Common myeloid progenitor, CD34-positive (primary cell): ENCODE measurements at regions of chr11 and their contacts with region 1.

Region 1: GRCh38 chr11:82701847-82702520 is 31.7 kb downstream of the FAM181B start:
- DNase-seq: peak; percentile 31 to 59 (median 48)
- H3K4me3 ChIP-seq: no peak overlapping the region
- H3K27ac ChIP-seq: no peak overlapping the region
- H3K4me1 ChIP-seq: no peaks in the 10 kb centered on the region
- H3K27me3 ChIP-seq: peaks cover 0 to 5% (median 0%) of the 10 kb centered on the region in 5 experiments

Region 2: DNA sequence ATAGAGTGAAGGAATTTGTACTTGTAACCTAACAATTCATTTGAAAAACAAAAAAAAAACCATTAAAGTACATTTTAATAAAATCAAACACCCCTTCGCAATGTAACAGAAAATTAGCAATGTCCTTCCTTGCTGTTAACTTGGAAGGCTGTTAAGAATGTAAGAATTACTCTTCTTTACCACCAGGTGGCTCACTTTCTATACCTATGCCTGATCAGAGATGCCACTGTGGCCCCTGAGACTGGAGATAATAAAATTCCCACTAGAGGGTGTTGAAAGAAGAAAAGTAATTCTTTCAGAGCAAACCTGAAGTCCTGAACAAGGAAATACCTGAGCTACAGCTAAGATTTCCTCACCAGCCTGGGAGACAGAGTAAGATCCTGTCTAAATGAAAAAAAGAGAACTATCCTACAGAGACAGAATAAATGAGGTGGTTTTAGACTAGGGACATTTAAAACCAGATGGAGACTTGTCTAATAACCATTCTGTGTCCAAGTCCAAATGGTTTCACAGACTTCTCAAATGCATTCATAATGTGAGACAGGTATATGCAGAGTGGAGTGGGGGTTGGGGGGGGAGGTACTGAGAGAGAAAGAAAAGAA is 1057.6 kb before region 1 on chr11:
- CTCF ChIA-PET with region 1: interaction called, 35 read pairs
- POLR2A ChIA-PET with region 1: no interaction called
- DNase-seq: peak; percentile 36 to 65 (median 63)
- H3K4me3 ChIP-seq: no peak overlapping the region
- H3K27ac ChIP-seq: no peak overlapping the region
- H3K4me1 ChIP-seq: no peaks in the 10 kb centered on the region
- H3K27me3 ChIP-seq: peaks cover 3 to 32% (median 6%) of the 10 kb centered on the region in 5 experiments

Region 3: DNA sequence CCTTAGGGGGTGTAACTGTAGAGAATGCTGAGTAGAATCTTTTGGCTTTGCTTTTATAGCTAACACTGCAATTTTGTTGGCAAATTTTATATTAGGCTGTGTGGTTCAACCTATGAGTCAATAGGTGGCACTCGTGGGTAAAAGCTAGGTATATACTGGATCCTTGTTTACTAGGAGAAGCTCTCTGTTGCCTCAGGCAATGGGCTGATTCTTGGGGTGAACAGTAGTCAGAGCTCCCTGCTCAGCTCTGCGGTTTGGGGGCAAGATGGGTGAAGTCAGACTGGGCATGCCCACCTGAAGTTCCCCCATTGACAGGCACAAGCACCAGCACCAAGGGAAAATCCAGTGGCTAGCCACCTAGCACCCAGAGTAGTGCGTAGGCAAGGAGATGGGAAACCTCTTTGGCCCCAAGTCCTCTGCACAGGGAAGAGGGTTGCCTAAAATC is 207.0 kb before region 1 on chr11:
- CTCF ChIA-PET with region 1: interaction called, 17 read pairs
- POLR2A ChIA-PET with region 1: no interaction called
- DNase-seq: peak; percentile 11 to 29 (median 21)
- H3K4me3 ChIP-seq: no peak overlapping the region
- H3K27ac ChIP-seq: no peak overlapping the region
- H3K4me1 ChIP-seq: no peaks in the 10 kb centered on the region
- H3K27me3 ChIP-seq: no peaks in the 10 kb centered on the region

Region 4: DNA sequence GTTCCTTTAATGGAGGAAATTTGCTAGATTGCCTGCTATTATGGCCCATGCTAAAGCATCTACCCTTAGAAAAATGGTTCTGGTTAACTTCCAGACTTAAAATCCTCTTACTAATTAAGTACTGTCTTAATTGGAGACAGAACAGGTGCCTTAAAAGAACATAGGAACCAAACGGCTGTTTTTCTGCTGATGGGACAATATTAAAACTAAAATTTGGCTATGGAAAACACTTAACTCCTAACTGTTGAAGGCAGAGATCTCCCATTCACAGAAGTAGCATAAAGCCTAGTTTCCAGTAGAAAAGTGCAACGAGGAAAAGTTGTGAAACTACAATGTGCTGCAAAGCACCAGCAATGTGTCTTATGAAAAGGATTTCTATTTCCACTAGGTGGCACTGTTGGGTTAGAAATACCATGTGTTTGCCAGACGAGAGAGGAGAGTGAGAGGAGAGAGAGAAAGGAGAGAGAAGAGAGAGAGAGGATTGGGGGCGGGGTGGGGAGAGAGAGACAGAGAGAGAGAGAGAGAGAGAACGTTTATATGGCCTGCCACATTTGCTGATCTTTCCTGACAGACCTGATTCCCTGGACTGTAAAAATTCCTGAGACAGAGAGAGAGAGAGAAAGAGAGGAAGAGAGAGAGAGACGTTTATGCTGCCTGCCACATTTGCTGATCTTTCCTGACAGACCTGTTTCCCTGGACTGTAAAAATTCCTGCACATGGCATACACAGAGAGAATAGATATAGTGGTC is 19.8 kb before region 1 on chr11:
- CTCF ChIA-PET with region 1: interaction called, 34 read pairs
- POLR2A ChIA-PET with region 1: no interaction called
- DNase-seq: peak; percentile 76 to 83 (median 77)
- H3K4me3 ChIP-seq: peak overlapping the region in 1 of 7 experiments; percentile 10
- H3K27ac ChIP-seq: no peak overlapping the region
- H3K4me1 ChIP-seq: peaks cover 0 to 2% (median 0%) of the 10 kb centered on the region in 4 experiments
- H3K27me3 ChIP-seq: peaks cover 0 to 5% (median 0%) of the 10 kb centered on the region in 5 experiments

Region 5: DNA sequence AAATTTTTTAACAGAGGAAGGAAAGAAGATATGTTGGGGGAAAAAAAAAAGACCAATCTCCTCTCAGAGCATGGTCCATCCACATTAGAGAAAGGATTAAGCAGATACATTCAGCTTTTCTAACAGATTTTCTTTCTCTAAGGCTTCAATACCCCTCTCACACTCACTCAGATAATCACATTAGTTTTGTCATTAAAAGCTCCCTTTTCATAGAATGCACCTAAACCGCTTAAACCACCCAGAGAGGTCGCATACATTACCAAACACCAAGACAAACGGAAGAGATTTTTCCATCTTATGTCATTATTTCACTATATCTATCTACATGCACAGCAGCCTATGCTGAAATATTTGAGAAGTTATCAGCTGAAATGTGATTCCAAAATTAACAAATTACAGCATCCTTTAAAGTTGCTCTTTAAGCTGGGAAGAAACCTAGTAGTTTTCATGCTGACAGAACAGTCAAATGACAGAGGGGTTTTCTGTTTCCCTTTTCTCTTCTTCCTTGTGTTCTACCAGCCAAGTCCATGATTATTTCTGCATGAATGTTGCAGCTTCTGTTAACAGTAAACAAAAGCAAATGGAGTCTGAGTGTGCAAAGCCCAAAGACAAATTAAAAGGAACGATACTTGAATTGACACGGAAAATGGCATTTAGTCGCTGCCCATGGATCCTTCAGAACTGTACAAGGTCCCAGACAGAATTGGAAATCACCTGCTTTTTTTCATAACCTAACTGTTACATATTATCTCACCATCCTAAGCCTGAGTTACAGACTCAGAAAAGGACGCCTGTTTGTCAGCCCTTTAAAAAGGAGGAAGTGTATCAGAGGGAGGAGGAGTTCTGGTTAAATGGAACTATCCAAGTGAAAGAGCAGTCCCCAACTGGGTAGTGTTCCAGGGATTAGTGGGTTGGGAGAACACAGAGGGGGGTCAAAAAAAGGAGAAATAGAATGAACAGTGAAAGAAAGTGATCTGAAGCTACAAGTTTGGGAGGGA is 143.7 kb after region 1 on chr11:
- CTCF ChIA-PET with region 1: no interaction called
- POLR2A ChIA-PET with region 1: no interaction called
- DNase-seq: peak in 2 of 3 donors; percentile 13 to 32
- H3K4me3 ChIP-seq: no peak overlapping the region
- H3K27ac ChIP-seq: no peak overlapping the region
- H3K4me1 ChIP-seq: no peaks in the 10 kb centered on the region
- H3K27me3 ChIP-seq: no peaks in the 10 kb centered on the region